Caco-2 (cell line): ENCODE measurements at regions of chr2 and their contacts with region 1.

Region 1: DNA sequence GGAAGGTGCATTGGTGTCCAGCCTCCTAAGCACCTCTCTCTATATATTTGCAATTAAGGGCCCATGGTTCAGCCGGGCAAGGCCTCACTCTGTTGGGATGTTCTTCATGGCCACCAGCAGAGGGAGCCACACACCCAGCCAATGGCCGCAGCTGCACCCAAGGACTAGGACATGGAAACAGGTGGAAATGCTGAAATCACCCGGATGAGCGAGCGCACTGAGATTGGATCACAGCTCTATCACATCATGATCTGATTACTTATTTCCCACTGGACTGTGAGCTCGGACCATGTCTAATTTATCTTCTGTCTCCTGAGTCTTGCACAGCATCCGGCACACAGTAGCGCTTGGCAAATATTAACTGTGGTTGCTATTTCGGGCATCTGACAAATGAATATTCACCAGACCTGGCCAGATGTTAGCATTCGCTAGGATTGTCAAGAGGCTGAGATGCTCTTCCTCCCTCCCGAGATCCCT is 31.2 kb downstream of the KIF3C start:
- DNase-seq: peak; percentile 80 to 83
- H3K4me3 ChIP-seq: no peak overlapping the region
- H3K4me3 Mint-ChIP-seq: no peak overlapping the region
- H3K27ac Mint-ChIP-seq: no peak overlapping the region
- H3K4me1 ChIP-seq: no peaks in the 10 kb centered on the region
- H3K4me1 Mint-ChIP-seq: no peaks in the 10 kb centered on the region
- H3K27me3 ChIP-seq: no peaks in the 10 kb centered on the region
- H3K27me3 Mint-ChIP-seq: no peaks in the 10 kb centered on the region
- CTCF ChIP-seq: peak; percentile 91 to 96

Region 2: DNA sequence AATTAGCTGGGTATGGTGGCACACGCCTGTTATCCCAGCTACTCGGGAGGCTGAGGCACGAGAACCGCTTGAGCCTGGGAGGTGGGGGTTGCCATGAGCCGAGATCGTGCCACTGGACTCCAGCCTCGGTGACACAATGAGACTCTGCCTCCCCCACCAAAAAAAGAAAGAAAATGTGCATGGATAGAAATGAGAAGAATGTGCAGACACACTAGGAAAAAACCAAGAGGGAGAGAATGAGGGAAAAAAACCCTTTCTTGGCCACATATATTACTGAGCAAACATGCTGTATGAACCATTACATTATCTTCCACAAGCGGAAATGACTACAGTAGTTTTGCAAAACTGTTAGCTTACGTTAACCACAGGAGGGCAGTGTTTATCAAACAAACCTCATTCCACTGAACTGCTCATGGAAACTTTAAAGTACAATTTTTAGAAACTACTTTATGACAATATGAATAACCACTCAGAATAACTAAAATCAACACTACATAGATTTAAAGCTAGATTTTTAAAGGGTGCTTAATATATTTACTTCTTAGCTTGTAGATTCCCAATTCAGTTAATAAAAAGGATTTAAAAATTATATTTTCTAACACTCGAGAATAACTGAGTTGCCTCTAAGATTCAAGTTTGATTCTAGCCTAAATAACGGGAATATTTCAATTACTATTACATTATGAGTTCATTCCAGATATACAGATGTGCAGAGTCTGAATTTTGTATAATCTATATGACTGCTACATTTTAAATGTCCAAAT is 99.2 kb before region 1 on chr2:
- CTCF ChIA-PET with region 1: interaction called, 6 read pairs
- POLR2A ChIA-PET with region 1: no interaction called
- intact Hi-C with region 1: loop called (anchors 5 kb)
- DNase-seq: peak in 1 of 2 experiments; percentile 56
- H3K4me3 ChIP-seq: no peak overlapping the region
- H3K4me3 Mint-ChIP-seq: no peak overlapping the region
- H3K27ac Mint-ChIP-seq: no peak overlapping the region
- H3K4me1 ChIP-seq: no peaks in the 10 kb centered on the region; the same call in 1 of the 2 replicates
- H3K4me1 Mint-ChIP-seq: peaks cover 7% of the 10 kb centered on the region
- H3K27me3 ChIP-seq: no peaks in the 10 kb centered on the region
- H3K27me3 Mint-ChIP-seq: no peaks in the 10 kb centered on the region
- CTCF ChIP-seq: peak; percentile 69 to 70

Region 3: DNA sequence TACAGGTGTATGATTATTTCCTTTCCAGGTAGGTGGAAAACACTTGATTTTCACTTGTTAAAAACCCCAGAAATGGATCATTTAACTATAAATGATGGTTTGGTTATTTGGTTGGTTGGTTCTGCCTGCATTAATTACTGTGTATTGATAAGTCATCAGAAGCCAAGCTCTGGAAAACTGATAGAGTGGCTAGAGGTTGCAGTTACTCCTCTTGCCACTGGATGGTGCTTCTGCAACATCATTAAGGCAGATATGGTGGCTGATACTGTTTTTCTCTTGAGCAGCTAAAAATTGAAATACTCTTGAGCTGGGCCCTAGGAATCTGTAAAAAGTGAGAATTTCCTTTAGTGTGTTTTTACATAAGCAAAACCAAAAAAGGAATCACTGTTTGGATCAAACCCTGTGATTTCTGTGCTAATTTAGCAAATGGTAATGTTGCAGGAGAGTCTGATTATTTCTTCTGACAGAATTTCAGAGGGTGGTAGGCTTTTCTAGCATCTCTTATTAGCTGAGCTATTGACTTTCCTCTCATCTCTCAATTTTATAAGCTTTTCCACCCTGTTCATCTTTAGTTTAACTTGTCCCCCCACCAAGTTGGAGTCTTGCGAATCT is 137.0 kb after region 1 on chr2:
- CTCF ChIA-PET with region 1: no interaction called
- POLR2A ChIA-PET with region 1: no interaction called
- intact Hi-C with region 1: loop called (anchors 5 kb)
- DNase-seq: peak in 1 of 2 experiments; percentile 34
- H3K4me3 ChIP-seq: no peak overlapping the region
- H3K4me3 Mint-ChIP-seq: no peak overlapping the region
- H3K27ac Mint-ChIP-seq: no peak overlapping the region
- H3K4me1 ChIP-seq: no peaks in the 10 kb centered on the region
- H3K4me1 Mint-ChIP-seq: peaks cover 14% of the 10 kb centered on the region
- H3K27me3 ChIP-seq: no peaks in the 10 kb centered on the region
- H3K27me3 Mint-ChIP-seq: no peaks in the 10 kb centered on the region
- CTCF ChIP-seq: peak; percentile 76 to 78

Region 4: DNA sequence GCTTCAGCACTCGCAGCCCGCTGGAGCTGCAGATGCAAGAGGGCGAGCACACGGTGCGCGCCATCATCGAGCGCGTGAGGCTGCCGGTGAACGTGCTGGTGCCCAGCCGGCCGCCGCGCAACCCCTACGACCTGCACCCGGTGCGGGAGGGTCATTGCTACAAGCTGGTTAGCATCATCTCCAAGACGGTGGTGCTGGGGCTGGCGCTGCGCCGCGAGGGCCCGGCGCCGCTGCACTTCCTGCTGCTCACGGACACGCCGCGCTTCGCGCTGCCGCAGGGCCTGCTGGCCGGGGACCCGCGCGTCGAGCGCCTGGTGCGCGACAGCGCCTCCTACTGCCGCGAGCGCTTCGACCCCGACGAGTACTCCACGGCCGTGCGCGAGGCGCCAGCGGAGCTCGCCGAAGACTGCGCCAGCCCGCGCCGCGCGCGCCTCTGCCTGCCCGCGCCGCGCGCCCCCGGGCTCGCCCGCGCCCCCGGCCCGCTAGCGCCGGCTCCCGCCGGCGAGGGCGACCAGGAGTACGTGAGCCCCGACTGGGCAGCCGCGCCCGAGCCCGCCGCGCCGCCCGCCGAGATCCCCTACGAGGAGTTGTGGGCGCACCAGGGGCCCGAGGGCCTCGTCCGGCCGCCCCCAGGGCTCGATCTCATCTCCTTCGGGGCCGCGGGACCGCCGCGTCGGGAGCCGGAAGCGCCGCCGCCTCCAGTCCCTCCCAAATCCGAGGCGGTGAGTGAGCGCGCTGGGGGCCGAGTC is 233.6 kb after region 1 on chr2:
- CTCF ChIA-PET with region 1: interaction called, 4 read pairs
- POLR2A ChIA-PET with region 1: interaction called, 3 read pairs
- intact Hi-C with region 1: loop called (anchors 5 kb)
- DNase-seq: peak; percentile 83 to 91
- H3K4me3 ChIP-seq: peak overlapping the region; percentile 43
- H3K4me3 Mint-ChIP-seq: peak overlapping the region; percentile 80
- H3K27ac Mint-ChIP-seq: no peak overlapping the region
- H3K4me1 ChIP-seq: peaks cover 3% of the 10 kb centered on the region
- H3K4me1 Mint-ChIP-seq: no peaks in the 10 kb centered on the region
- H3K27me3 ChIP-seq: no peaks in the 10 kb centered on the region
- H3K27me3 Mint-ChIP-seq: no peaks in the 10 kb centered on the region
- CTCF ChIP-seq: peak; percentile 59 to 74

Region 5: DNA sequence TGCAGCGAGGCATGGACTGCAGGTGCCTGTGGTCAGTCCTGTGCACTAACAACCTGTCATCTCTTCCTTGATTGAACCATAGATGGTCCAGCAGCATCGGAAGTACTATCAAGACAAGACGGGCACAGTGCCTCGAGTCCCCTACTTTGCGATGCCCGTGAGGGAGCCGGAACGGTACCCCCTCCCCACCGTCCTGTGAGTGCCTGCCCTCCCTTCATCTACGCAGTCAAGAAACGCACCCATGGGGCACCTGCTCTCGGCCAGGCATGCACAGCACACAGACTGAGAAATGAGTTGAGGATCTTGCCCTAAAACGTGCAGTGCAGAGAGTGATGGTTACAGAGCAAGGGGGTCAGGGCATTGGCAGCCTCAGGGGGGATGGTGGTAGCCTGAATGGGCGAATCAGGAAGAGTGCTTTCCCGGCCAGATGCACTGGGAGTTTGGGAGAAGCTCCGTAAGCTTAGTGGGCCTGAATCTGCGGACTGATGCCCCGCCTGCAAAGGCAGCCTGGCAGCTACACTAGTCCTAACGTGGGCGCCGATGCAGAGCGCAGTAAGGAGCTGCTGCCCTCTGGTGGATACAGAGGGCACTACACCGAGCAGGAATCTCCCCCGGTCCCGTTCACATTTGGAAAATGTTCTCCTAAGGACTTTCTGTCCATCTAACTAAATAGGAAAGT is 626.5 kb after region 1 on chr2:
- CTCF ChIA-PET with region 1: no interaction called
- POLR2A ChIA-PET with region 1: no interaction called
- intact Hi-C with region 1: loop called (anchors 10 kb)
- DNase-seq: peak; percentile 61 to 80
- H3K4me3 ChIP-seq: no peak overlapping the region
- H3K4me3 Mint-ChIP-seq: no peak overlapping the region
- H3K27ac Mint-ChIP-seq: no peak overlapping the region
- H3K4me1 ChIP-seq: peaks cover 9% of the 10 kb centered on the region; the same call in 1 of the 2 replicates
- H3K4me1 Mint-ChIP-seq: no peaks in the 10 kb centered on the region
- H3K27me3 ChIP-seq: no peaks in the 10 kb centered on the region
- H3K27me3 Mint-ChIP-seq: peaks cover 20% of the 10 kb centered on the region
- CTCF ChIP-seq: peak; percentile 98